Activated CD4-positive, alpha-beta T cell treated with anti-CD3 and anti-CD28 coated beads for 36 hours (primary cell): ENCODE measurements at regions of chr2 and their contacts with region 1.

Region 1: GRCh38 chr2:113370478-113371091 is 66.9 kb upstream of the ZNG1B start:
- DNase-seq: peak; percentile 78
- ATAC-seq: peak; percentile 98
- H3K4me3 Mint-ChIP-seq: no peak overlapping the region
- H3K27ac Mint-ChIP-seq: no peak overlapping the region
- H3K4me1 Mint-ChIP-seq: peaks cover 7% of the 10 kb centered on the region
- H3K27me3 Mint-ChIP-seq: peaks cover 2% of the 10 kb centered on the region

Region 2: DNA sequence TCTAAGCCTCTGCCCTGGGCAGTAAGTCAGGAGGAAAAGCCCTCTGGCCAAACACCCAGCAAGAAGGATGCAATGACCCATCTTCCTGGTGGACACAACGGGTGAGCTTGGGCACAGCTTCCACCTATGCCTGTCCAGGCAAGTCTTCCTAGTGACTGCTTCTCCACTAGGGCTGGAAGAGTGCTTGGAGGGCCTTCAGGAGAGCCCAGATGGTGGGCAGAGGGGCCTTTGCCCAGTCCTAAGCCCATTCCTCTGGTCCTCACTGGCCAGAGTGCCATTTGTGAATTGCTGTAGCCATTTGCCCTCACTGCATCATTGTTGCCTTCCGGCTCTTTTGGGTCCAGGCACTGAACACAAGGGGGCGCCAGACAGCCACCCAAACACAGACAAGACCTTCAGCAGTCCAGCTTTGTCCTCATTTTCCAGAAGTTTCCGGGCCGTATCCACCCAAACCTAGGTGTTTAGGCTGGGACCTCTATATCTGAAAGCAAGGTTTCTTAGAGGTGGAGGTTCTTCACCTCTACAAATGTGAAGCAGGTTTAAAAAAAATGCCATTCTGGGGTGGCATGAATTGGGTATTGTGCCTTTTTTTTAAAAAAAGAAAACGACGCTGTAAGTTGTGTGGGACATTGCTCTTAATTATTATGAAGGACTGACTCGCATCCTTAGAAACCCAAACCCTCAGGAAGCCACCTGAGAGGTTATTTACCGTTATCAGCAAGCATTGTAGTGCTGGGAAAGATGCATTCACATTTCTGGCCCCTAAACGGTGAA is 121.4 kb before region 1 on chr2:
- CTCF ChIA-PET with region 1: interaction called, 9 read pairs
- POLR2A ChIA-PET with region 1: no interaction called
- intact Hi-C with region 1: loop called (anchors 1 kb)
- DNase-seq: peak; percentile 88
- ATAC-seq: peak; percentile 77
- H3K4me3 Mint-ChIP-seq: no peak overlapping the region
- H3K27ac Mint-ChIP-seq: no peak overlapping the region
- H3K4me1 Mint-ChIP-seq: peaks cover 44% of the 10 kb centered on the region
- H3K27me3 Mint-ChIP-seq: no peaks in the 10 kb centered on the region

Region 3: DNA sequence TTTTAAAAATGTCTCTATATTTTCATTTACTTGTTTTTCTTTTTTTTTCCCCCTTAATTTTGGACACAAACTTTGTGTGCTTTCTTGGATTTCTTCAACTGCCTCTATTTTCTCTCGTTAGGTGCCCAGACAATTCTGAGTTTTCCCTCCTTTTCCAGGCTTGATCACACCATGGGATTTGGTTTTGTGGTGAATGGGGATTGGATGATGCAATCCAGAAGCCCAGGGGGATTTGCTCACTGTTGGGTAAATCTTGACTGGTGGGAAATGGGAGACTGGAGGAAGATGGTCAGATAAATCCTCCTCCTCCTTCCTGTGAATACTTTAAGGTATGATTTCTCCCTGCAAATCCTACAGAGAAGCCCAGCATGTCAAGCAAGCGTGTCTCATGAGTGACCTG is 72.4 kb before region 1 on chr2:
- CTCF ChIA-PET with region 1: interaction called, 3 read pairs
- POLR2A ChIA-PET with region 1: no interaction called
- intact Hi-C with region 1: loop called (anchors 2 to 10 kb)
- DNase-seq: no peak
- ATAC-seq: no peak
- H3K4me3 Mint-ChIP-seq: no peak overlapping the region
- H3K27ac Mint-ChIP-seq: no peak overlapping the region
- H3K4me1 Mint-ChIP-seq: no peaks in the 10 kb centered on the region
- H3K27me3 Mint-ChIP-seq: peaks cover 6% of the 10 kb centered on the region